Activated naive CD4-positive, alpha-beta T cell treated with anti-CD3 and anti-CD28 coated beads for 36 hours (primary cell): ENCODE measurements at regions of chr19 and their contacts with region 1.

Region 1: DNA sequence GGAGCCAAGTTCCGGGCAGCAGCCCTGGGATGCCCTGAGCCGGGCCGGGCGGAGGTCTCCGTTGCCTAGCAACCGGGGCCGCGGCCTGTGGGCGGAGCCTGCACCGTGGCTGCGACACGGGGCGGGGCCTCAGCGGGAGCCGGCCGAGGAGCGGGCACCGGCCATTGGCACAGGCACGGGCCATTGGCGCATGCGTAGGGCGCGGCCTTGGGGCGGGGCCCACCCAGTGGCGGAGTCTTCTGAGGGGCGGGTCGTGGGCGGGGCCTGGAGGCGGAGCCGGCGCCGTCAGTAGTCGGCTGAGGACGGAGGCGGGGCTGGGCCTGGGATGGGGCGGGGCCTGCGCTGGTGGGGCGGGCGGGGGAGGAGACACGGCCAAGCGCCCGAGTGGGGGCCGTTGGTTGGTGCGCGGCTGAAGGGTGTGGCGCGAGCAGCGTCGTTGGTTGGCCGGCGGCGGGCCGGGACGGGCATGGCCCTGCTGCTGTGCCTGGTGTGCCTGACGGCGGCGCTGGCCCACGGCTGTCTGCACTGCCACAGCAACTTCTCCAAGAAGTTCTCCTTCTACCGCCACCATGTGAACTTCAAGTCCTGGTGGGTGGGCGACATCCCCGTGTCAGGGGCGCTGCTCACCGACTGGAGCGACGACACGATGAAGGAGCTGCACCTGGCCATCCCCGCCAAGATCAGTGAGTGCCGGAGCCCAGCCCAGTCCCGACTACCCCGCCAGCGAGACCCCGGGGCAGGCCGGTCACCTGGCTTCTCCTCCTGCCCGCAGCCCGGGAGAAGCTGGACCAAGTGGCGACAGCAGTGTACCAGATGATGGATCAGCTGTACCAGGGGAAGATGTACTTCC is at the start of gene IZUMO4:
- DNase-seq: peak; percentile 100
- H3K4me3 Mint-ChIP-seq: peak within 1 kb of the TSS; percentile 94
- H3K27ac Mint-ChIP-seq: peak within 1 kb of the TSS; percentile 92
- H3K4me1 Mint-ChIP-seq: peaks cover 36% of the 10 kb centered on the region
- H3K27me3 Mint-ChIP-seq: no peaks in the 10 kb centered on the region
- total RNA-seq, gene IZUMO4: 13.1 to 14.2 TPM

Region 2: DNA sequence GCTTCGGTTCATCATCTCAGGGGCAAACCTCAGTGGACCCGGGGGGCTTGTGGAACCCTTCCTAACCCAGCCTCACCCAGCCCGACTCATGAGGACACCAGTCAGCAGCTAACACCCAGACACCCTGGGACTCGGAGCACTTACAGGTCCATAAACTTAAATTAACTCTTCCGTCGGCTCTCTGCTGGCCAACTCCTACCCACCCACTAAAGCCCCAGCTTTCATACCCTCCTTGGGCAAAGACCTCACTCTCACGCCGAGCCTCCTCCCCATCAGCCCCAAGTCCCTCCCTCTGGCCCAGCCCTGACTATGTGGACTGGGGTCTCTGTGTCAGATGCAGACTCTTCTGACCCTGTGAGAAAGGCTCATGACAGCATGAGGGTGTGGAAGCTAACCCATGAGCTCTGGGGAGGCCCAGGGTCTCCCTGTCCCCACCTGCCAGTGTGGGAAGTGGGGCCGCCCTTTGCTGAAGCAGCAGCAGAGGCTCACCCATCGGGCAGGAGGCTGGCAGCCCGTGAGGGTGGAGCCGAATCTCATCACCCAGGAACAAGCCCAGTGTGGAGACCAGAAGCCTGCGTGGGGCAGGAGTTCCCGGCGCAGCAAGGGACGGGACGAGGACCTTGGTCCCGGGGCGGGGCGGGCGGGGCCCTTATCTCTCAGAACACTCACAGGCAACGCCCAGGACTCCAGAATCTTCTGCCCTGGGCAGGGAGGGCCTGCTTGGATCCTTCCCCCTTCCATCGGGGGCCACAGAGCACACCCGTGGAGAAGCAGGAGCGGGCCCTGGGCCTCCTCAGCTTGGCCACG is 464.0 kb before region 1 on chr19:
- CTCF ChIA-PET with region 1: no interaction called
- intact Hi-C with region 1: no loop called
- DNase-seq: no peak
- H3K4me3 Mint-ChIP-seq: no peak overlapping the region
- H3K27ac Mint-ChIP-seq: no peak overlapping the region
- H3K4me1 Mint-ChIP-seq: no peaks in the 10 kb centered on the region
- H3K27me3 Mint-ChIP-seq: no peaks in the 10 kb centered on the region

Region 3: GRCh38 chr19:1652471-1653299 is 444.0 kb before region 1 on chr19 and contains the start of gene TCF3:
- CTCF ChIA-PET with region 1: no interaction called
- intact Hi-C with region 1: loop called (anchors 5 kb)
- DNase-seq: peak; percentile 98
- H3K4me3 Mint-ChIP-seq: peak within 1 kb of the TSS; percentile 82
- H3K27ac Mint-ChIP-seq: peak within 1 kb of the TSS; percentile 89
- H3K4me1 Mint-ChIP-seq: peaks cover 19% of the 10 kb centered on the region
- H3K27me3 Mint-ChIP-seq: no peaks in the 10 kb centered on the region
- total RNA-seq, gene TCF3: 84.8 to 86.7 TPM

Region 4: GRCh38 chr19:1896508-1896907 is 200.2 kb before region 1 on chr19:
- CTCF ChIA-PET with region 1: no interaction called
- intact Hi-C with region 1: loop called (anchors 5 kb)
- DNase-seq: no peak
- H3K4me3 Mint-ChIP-seq: peak overlapping the region; percentile 85
- H3K27ac Mint-ChIP-seq: peak overlapping the region; percentile 95
- H3K4me1 Mint-ChIP-seq: peaks cover 28% of the 10 kb centered on the region
- H3K27me3 Mint-ChIP-seq: no peaks in the 10 kb centered on the region

Region 5: GRCh38 chr19:2016041-2016807 is 80.5 kb before region 1 on chr19:
- CTCF ChIA-PET with region 1: no interaction called
- intact Hi-C with region 1: loop called (anchors 1 kb)
- DNase-seq: peak; percentile 77
- H3K4me3 Mint-ChIP-seq: peak overlapping the region; percentile 59
- H3K27ac Mint-ChIP-seq: peak overlapping the region; percentile 47
- H3K4me1 Mint-ChIP-seq: peaks cover 17% of the 10 kb centered on the region
- H3K27me3 Mint-ChIP-seq: no peaks in the 10 kb centered on the region

Region 6: DNA sequence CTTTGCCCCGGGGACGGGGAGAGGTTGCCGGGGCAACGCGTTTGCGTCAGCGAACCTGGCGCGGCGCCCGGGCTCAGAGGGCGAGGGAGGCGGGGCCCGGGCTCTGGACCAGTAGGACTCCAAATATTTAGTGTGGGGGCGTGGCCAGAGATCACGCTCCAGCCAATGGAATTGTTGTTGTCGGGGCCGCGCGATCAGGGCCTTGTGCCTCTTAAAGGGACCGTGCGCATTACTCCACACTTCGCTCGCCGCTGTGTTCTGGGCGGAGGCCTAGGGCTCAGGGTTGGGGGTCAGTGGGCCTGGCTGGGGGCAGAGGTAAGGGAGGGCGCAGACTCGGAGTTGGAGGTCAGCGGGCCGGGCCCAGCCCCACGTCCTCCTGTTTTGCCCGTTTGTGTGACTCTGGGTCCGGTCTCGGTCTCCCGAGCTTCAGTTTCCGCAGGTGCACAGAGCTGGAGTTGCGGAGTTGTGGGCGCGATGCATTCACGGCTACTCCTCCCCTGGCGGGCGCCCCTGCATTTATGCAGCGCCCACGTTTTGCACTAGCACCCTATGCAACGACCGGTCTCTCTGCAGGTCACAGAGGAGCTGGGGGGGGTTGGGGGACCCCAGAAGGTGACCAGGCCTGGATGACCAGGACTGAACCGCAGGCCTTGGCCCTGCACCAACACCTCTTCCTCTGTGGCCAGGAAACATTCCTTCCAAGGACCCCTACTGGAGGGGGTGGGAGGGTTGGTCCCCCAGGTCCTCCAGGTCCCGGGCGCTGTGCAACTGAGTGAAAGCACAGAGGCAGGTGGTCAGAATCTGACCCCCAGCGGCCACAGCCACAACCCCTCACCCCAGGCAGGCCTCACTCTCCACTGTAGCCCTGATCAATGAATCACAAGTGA is 35.0 kb before region 1 on chr19:
- CTCF ChIA-PET with region 1: interaction called, 3 read pairs
- intact Hi-C with region 1: loop called (anchors 1 kb)
- DNase-seq: peak; percentile 99
- H3K4me3 Mint-ChIP-seq: peak overlapping the region; percentile 87
- H3K27ac Mint-ChIP-seq: peak overlapping the region; percentile 86
- H3K4me1 Mint-ChIP-seq: peaks cover 36% of the 10 kb centered on the region
- H3K27me3 Mint-ChIP-seq: no peaks in the 10 kb centered on the region

Region 7: GRCh38 chr19:2151339-2152229 is 54.9 kb after region 1 on chr19 and contains the start of gene AP3D1:
- CTCF ChIA-PET with region 1: interaction called, 3 read pairs
- intact Hi-C with region 1: loop called (anchors 1 kb)
- DNase-seq: peak; percentile 100
- H3K4me3 Mint-ChIP-seq: peak within 1 kb of the TSS; percentile 83
- H3K27ac Mint-ChIP-seq: peak within 1 kb of the TSS; percentile 74
- H3K4me1 Mint-ChIP-seq: peaks cover 39% of the 10 kb centered on the region
- H3K27me3 Mint-ChIP-seq: no peaks in the 10 kb centered on the region
- total RNA-seq, gene AP3D1: 60.5 to 64.2 TPM

Region 8: GRCh38 chr19:2269244-2269947 is 172.7 kb after region 1 on chr19:
- CTCF ChIA-PET with region 1: no interaction called
- intact Hi-C with region 1: loop called (anchors 1 kb)
- DNase-seq: peak; percentile 99
- H3K4me3 Mint-ChIP-seq: peak overlapping the region; percentile 89
- H3K27ac Mint-ChIP-seq: peak overlapping the region; percentile 92
- H3K4me1 Mint-ChIP-seq: peaks cover 43% of the 10 kb centered on the region
- H3K27me3 Mint-ChIP-seq: no peaks in the 10 kb centered on the region

Region 9: GRCh38 chr19:2337329-2338043 is 240.8 kb after region 1 on chr19:
- CTCF ChIA-PET with region 1: no interaction called
- intact Hi-C with region 1: no loop called
- DNase-seq: no peak
- H3K4me3 Mint-ChIP-seq: no peak overlapping the region
- H3K27ac Mint-ChIP-seq: no peak overlapping the region
- H3K4me1 Mint-ChIP-seq: peaks cover 16% of the 10 kb centered on the region
- H3K27me3 Mint-ChIP-seq: no peaks in the 10 kb centered on the region